A673 (cell line): ENCODE measurements at regions of chr2 and their contacts with region 1.

Region 1: DNA sequence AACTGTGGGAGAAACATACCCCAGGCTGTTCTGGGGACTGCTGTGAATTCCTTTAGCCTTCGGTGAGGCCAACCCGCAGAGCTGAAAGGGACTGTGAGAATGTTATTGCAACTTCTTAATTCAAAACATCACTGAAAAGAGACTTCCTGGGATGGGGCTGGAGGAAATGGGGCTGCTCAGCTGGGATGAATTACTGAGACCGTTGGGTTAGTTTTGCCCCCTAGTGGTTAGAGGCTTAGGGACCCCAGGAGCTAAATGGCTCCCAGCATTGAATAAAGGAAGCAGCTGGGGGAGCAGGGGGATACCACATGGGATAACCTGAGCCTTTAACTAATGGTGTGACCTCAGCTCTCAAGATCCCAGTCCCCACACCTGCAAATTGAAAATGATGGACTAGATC is 941.1 kb upstream of the FANCL start:
- DNase-seq: peak; percentile 66
- H3K4me3 ChIP-seq: no peak overlapping the region
- H3K27ac ChIP-seq: no peak overlapping the region
- H3K4me1 ChIP-seq: no peaks in the 10 kb centered on the region
- H3K27me3 ChIP-seq: no peaks in the 10 kb centered on the region
- CTCF ChIP-seq: peak; percentile 73

Region 2: GRCh38 chr2:57759822-57760300 is 1422.4 kb before region 1 on chr2:
- CTCF ChIA-PET with region 1: no interaction called
- POLR2A ChIA-PET with region 1: no interaction called
- intact Hi-C with region 1: loop called (anchors 10 kb)
- DNase-seq: peak; percentile 85
- H3K4me3 ChIP-seq: peak overlapping the region; percentile 27
- H3K27ac ChIP-seq: no peak overlapping the region
- H3K4me1 ChIP-seq: peaks cover 13% of the 10 kb centered on the region
- H3K27me3 ChIP-seq: no peaks in the 10 kb centered on the region
- CTCF ChIP-seq: peak; percentile 94

Region 3: DNA sequence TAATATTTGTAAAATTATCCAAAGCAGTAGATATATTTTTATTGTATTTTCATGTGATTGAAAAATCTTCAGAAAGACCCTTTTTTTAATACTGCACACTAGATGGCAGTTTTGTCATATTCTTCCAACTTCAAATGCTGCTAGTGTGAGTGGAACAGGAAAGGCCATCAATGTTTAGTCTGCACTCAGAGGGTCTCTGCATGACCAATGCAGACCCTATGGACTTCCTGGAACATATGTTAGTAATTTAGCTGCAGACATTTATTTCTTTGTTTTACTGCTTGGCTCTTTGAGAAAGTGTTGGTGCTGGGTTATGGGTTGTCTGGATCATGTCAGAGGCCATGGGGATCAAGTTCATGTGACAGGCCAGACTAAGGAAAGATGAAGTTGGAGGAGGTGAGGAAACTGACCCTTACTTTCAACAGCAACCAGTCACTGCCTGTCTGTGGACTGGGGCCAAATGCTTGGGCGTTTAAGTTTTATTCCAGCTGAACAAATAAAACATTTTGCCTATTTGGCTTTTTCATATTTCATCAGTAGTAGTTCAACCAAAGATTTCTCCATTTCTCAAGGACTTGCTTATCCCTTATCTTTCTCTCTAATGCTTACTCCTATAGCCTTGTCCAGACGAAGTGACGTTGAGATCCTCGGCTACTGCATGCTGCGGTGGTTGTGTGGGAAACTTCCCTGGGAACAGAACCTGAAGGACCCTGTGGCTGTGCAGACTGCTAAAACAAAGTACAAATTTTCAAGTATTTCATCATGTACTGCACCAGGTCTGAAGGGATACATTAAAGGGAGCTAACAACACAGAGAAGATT is 1050.8 kb before region 1 on chr2:
- CTCF ChIA-PET with region 1: no interaction called
- POLR2A ChIA-PET with region 1: no interaction called
- intact Hi-C with region 1: loop called (anchors 10 kb)
- DNase-seq: peak; percentile 23
- H3K4me3 ChIP-seq: no peak overlapping the region
- H3K27ac ChIP-seq: no peak overlapping the region
- H3K4me1 ChIP-seq: no peaks in the 10 kb centered on the region
- H3K27me3 ChIP-seq: no peaks in the 10 kb centered on the region
- CTCF ChIP-seq: peak; percentile 52

Region 4: GRCh38 chr2:58571181-58571852 is 610.9 kb before region 1 on chr2:
- CTCF ChIA-PET with region 1: interaction called, 4 read pairs
- POLR2A ChIA-PET with region 1: no interaction called
- intact Hi-C with region 1: loop called (anchors 5 kb)
- DNase-seq: peak; percentile 78
- H3K4me3 ChIP-seq: no peak overlapping the region
- H3K27ac ChIP-seq: no peak overlapping the region
- H3K4me1 ChIP-seq: peaks cover 7% of the 10 kb centered on the region
- H3K27me3 ChIP-seq: no peaks in the 10 kb centered on the region
- CTCF ChIP-seq: peak; percentile 76

Region 5: DNA sequence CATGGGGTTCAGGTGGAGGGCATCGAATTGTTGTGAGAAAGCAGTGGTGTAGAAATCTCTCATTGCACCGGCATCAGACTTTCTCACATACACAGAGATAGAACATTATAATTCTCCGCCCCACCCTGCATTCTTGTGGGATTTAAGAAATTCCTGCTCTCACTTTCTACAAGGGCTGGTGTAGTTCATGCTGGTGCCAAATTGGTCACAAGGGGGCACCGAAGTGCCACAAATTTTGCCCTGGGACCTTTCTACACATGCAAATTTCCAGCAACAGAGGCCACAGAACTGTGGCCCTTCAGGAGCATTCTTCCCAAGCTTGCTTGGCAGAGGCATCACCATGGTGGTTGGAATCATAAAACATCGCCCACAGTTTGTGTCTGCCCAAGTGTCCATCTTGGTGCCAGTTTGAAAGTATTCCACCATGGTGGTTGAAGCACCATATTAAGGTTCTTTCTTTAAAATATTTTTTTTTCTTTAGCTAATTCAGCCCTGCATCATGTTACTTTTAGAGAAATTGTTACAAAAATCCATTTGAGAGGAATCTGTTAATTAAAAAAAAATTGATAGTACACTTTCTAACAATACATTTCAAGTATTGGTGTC is 420.0 kb before region 1 on chr2:
- CTCF ChIA-PET with region 1: no interaction called
- POLR2A ChIA-PET with region 1: no interaction called
- intact Hi-C with region 1: loop called (anchors 2 kb)
- DNase-seq: peak; percentile 77
- H3K4me3 ChIP-seq: no peak overlapping the region
- H3K27ac ChIP-seq: no peak overlapping the region
- H3K4me1 ChIP-seq: no peaks in the 10 kb centered on the region
- H3K27me3 ChIP-seq: no peaks in the 10 kb centered on the region
- CTCF ChIP-seq: peak; percentile 71

Region 6: DNA sequence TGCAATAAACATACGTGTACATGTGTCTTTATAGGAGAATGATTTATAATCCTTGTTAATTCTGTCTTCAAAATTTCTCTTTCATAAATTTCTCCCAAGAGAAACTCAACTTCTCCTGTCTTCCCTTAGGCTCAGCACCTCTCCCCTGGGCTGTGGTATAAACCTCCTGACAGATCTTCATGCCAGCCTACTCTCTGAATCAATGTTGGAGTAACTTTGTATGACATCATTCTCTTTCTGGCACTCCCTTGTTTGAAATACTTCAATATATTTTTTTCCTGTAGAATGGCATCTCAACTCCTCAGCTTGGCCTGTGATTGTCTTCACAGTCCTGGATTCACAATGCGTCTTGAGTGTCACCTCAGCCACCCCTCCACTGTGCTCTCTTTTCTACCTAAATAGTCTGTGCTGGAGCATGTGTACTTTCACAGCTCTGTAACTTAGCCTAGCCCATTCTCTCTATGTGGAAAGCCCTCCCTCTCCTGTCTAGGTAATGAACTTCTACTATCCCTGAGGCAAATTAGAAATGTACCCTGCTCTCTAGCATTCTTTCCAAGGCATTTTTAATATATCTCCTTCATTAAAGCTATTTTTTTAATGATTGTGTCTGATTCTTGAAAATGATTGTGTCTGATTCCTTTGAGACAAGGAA is 291.2 kb before region 1 on chr2:
- CTCF ChIA-PET with region 1: no interaction called
- POLR2A ChIA-PET with region 1: no interaction called
- intact Hi-C with region 1: no loop called
- DNase-seq: no peak
- H3K4me3 ChIP-seq: no peak overlapping the region
- H3K27ac ChIP-seq: no peak overlapping the region
- H3K4me1 ChIP-seq: no peaks in the 10 kb centered on the region
- H3K27me3 ChIP-seq: no peaks in the 10 kb centered on the region
- CTCF ChIP-seq: no peak

Region 7: GRCh38 chr2:59025157-59025757 is 157.0 kb before region 1 on chr2:
- CTCF ChIA-PET with region 1: interaction called, 3 read pairs
- POLR2A ChIA-PET with region 1: no interaction called
- intact Hi-C with region 1: loop called (anchors 5 kb)
- DNase-seq: peak; percentile 58
- H3K4me3 ChIP-seq: no peak overlapping the region
- H3K27ac ChIP-seq: no peak overlapping the region
- H3K4me1 ChIP-seq: no peaks in the 10 kb centered on the region
- H3K27me3 ChIP-seq: no peaks in the 10 kb centered on the region
- CTCF ChIP-seq: peak; percentile 93

Region 8: GRCh38 chr2:59655809-59656208 is 473.6 kb after region 1 on chr2:
- CTCF ChIA-PET with region 1: no interaction called
- POLR2A ChIA-PET with region 1: no interaction called
- intact Hi-C with region 1: no loop called
- DNase-seq: no peak
- H3K4me3 ChIP-seq: no peak overlapping the region
- H3K27ac ChIP-seq: no peak overlapping the region
- H3K4me1 ChIP-seq: no peaks in the 10 kb centered on the region
- H3K27me3 ChIP-seq: no peaks in the 10 kb centered on the region
- CTCF ChIP-seq: no peak